ENCODE measurements at regions of chr15 and their contacts with region 1.

Region 1: DNA sequence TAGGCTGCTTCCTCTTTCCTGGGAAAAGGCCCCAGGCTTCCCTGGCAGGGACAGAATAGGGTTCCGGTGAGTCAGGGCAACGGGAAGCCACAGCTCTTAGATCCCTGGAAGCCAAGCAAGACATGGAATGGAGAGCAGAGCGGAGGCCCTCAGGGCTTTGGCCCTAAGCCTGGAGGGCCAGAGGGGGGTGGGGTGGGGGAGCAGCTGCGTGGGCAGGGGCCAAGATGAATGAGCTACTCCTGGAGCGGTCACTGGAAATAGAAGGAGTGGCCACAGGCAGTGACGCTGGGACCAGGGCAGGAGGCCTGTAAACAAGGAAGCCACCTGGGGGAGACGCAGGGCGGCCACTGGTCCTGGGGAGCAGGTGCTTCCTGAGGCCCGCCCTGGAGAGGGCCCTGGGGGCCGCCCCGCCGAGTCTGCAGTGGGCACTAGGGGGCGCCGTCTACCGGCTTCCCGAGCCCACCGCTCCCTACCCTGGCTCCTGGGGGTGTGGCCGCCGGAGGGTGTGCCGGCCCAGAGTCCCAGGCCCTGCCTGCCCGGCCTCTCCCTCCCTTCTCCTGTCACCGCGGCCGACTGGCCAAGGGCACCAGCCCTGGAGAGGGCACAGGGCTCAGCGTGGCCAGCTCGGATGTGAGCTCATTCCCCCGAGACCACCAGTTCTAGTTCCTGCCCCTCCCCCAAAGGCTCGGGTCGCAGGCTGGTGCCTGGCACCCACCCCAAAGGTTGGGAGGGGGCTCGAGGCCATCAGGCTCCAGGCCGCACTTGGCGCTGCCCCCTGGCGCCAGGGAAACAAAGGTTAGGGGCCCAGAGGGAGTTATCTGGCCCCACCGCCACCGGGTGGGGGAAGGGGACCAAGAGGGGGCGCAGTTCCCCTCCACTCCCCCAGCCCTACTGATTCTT is 12.1 kb downstream of the VPS18 start:
- DNase-seq: peak; percentile 55 to 75 (median 69)
- ATAC-seq: peak; percentile 76
- H3K4me3 ChIP-seq: peak overlapping the region; percentile 66
- H3K4me3 Mint-ChIP-seq: peak overlapping the region; percentile 60 to 88 (median 84)
- H3K27ac ChIP-seq: peak overlapping the region; percentile 55
- H3K27ac Mint-ChIP-seq: peak overlapping the region in 8 of 9 donors; percentile 19 to 93 (median 88)
- H3K4me1 ChIP-seq: peaks cover 6 to 16% of the 10 kb centered on the region in 2 donors
- H3K4me1 Mint-ChIP-seq: peaks cover 29 to 44% (median 34%) of the 10 kb centered on the region in 7 donors
- H3K27me3 ChIP-seq: no peaks in the 10 kb centered on the region
- H3K27me3 Mint-ChIP-seq: no peaks in the 10 kb centered on the region

Region 2: DNA sequence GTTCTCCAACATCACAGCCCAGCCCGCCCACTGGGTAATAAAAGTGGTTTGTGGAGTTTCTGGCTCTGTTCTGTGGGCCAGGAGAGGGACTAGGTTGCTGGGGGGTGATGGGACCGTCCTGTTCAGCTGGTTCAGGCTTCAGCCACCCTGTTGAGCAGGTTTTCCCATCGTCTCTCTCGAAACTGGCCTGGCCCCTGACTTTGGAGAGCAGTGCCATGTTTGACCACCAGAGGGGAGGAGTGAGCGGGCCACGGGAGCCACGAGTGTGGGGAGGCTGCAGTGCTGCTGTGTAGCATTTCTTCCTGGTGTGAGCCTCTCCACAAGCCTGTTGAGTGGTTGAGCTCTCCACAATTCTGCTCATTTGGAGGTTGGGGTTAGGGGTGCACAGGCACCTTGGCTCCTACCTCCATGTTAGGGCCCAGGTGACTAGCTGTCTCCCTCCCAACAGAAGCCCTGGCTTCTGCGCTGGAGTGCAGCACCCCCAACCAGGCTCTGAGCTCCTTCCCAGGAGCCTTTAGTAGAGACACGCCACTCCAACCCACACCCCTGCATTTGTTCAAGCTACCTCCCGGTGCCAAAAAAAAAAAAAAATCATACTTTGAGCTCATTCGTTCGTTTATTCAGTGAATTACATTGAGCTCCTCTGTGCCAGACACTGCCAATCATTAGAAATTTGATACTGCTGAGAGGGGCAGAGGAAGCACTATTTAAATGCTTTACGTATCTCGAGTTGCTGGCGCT is 48.6 kb before region 1 on chr15:
- CTCF ChIA-PET with region 1: interaction called, 15 read pairs
- POLR2A ChIA-PET with region 1: interaction called, 3 read pairs
- intact Hi-C with region 1: no loop called
- DNase-seq: peak; percentile 58 to 88 (median 74)
- ATAC-seq: peak; percentile 95
- H3K4me3 ChIP-seq: no peak overlapping the region
- H3K4me3 Mint-ChIP-seq: no peak overlapping the region
- H3K27ac ChIP-seq: no peak overlapping the region
- H3K27ac Mint-ChIP-seq: peak overlapping the region in 1 of 9 donors; percentile 9
- H3K4me1 ChIP-seq: no peaks in the 10 kb centered on the region
- H3K4me1 Mint-ChIP-seq: peaks cover 0 to 18% (median 13%) of the 10 kb centered on the region in 7 donors
- H3K27me3 ChIP-seq: no peaks in the 10 kb centered on the region
- H3K27me3 Mint-ChIP-seq: peaks cover 0 to 2% (median 0%) of the 10 kb centered on the region in 5 donors

Region 3: DNA sequence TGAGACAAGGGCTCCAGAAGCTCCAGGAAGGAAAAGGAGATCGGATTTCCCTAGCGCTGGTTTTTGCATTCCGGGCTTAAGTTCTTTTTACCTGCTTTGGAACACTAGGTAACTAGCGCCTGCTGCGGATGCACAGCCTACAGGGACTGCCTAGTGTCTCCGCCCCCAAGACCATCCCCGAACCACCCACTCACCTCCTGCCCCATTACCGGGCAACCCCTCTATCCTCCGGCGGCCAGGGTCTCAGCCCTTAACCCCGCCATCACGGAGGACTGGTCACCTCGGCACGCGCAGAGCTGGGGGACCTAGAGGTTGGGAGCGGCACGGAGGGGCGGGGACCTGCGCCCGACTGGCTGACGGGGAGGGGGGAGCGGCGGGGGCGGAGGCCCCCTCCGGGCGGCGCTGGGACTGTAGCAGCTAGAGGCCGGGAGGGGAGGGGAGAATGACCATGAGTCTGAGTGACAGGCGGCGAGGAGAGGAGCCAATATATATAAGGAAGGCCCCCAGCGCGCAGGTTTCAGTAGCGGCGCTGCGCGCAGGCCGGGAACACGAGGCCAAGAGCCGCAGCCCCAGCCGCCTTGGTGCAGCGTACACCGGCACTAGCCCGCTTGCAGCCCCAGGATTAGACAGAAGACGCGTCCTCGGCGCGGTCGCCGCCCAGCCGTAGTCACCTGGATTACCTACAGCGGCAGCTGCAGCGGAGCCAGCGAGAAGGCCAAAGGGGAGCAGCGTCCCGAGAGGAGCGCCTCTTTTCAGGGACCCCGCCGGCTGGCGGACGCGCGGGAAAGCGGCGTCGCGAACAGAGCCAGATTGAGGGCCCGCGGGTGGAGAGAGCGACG is 22.7 kb after region 1 on chr15 and contains the start of gene DLL4:
- CTCF ChIA-PET with region 1: interaction called, 31 read pairs
- POLR2A ChIA-PET with region 1: no interaction called
- intact Hi-C with region 1: loop called (anchors 2 kb)
- DNase-seq: peak in 6 of 9 donors; percentile 36 to 54 (median 48)
- ATAC-seq: peak; percentile 56
- H3K4me3 ChIP-seq: peak within 1 kb of the TSS; percentile 68
- H3K4me3 Mint-ChIP-seq: peak within 1 kb of the TSS; percentile 80 to 96 (median 83)
- H3K27ac ChIP-seq: no peak within 1 kb of the TSS
- H3K27ac Mint-ChIP-seq: peak within 1 kb of the TSS in 2 of 9 donors; percentile 32 to 55
- H3K4me1 ChIP-seq: peaks cover 19 to 54% of the 10 kb centered on the region in 2 donors
- H3K4me1 Mint-ChIP-seq: peaks cover 27 to 53% (median 49%) of the 10 kb centered on the region in 7 donors
- H3K27me3 ChIP-seq: peaks cover 5 to 43% of the 10 kb centered on the region in 2 donors
- H3K27me3 Mint-ChIP-seq: peaks cover 53 to 80% (median 56%) of the 10 kb centered on the region in 5 donors
- total RNA-seq, gene DLL4: not detected

Region 4: DNA sequence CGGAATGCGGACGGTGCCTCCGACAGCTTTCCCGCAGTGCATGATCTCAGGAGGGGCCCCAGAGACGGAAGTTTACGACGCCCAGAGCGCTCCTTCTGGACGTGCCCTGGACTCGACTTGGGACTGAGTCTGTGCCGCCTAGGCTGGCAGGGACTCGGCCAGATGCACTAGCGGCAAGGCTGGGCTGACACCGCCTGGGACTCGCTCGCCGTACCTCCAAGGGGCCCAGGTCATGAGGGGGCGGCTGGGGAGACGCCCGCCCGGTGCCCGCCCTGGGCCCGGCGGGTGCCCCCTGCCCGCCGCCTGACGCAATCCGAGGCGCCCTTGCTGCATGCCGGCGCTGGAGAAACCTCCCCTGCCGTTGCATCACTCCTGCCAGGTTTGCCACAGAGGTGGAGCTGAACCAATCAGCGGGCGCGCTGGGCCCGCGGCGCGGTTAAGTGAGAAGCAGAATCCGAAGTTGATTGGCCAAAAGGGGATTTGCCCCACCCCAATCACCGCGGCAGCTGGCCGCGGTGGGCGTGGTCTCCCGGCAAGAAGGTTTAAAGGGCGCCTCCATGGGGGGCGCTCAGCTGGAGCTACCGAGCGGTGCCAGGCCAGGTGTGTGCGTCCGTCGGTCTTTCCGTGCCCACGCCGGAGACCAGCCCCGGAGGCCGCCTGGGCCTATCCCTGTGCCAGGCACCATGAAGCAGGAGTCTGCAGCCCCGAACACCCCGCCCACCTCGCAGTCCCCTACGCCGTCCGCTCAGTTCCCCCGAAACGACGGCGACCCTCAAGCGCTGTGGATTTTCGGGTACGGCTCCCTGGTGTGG is 46.8 kb after region 1 on chr15 and contains the start of gene CHAC1:
- CTCF ChIA-PET with region 1: interaction called, 3 read pairs
- POLR2A ChIA-PET with region 1: interaction called, 4 read pairs
- intact Hi-C with region 1: loop called in 1 of 2 experiments (anchors 1 kb)
- DNase-seq: peak; percentile 79 to 97 (median 94)
- ATAC-seq: peak; percentile 98
- H3K4me3 ChIP-seq: peak within 1 kb of the TSS; percentile 68
- H3K4me3 Mint-ChIP-seq: peak within 1 kb of the TSS; percentile 87 to 96 (median 94)
- H3K27ac ChIP-seq: peak within 1 kb of the TSS; percentile 74
- H3K27ac Mint-ChIP-seq: peak within 1 kb of the TSS in 8 of 9 donors; percentile 76 to 95 (median 88)
- H3K4me1 ChIP-seq: peaks cover 10 to 14% of the 10 kb centered on the region in 2 donors
- H3K4me1 Mint-ChIP-seq: peaks cover 7 to 34% (median 19%) of the 10 kb centered on the region in 7 donors
- H3K27me3 ChIP-seq: no peaks in the 10 kb centered on the region
- H3K27me3 Mint-ChIP-seq: peaks cover 0 to 4% (median 0%) of the 10 kb centered on the region in 5 donors
- total RNA-seq, gene CHAC1: 0.24 to 5.7 (median 1.1) TPM

Region 5: GRCh38 chr15:40982855-40983254 is 76.5 kb after region 1 on chr15:
- CTCF ChIA-PET with region 1: no interaction called
- POLR2A ChIA-PET with region 1: no interaction called
- intact Hi-C with region 1: no loop called
- DNase-seq: no peak
- ATAC-seq: no peak
- H3K4me3 ChIP-seq: no peak overlapping the region
- H3K4me3 Mint-ChIP-seq: no peak overlapping the region
- H3K27ac ChIP-seq: no peak overlapping the region
- H3K27ac Mint-ChIP-seq: peak overlapping the region in 1 of 9 donors; percentile 14
- H3K4me1 ChIP-seq: no peaks in the 10 kb centered on the region
- H3K4me1 Mint-ChIP-seq: no peaks in the 10 kb centered on the region
- H3K27me3 ChIP-seq: no peaks in the 10 kb centered on the region
- H3K27me3 Mint-ChIP-seq: no peaks in the 10 kb centered on the region

Region 6: DNA sequence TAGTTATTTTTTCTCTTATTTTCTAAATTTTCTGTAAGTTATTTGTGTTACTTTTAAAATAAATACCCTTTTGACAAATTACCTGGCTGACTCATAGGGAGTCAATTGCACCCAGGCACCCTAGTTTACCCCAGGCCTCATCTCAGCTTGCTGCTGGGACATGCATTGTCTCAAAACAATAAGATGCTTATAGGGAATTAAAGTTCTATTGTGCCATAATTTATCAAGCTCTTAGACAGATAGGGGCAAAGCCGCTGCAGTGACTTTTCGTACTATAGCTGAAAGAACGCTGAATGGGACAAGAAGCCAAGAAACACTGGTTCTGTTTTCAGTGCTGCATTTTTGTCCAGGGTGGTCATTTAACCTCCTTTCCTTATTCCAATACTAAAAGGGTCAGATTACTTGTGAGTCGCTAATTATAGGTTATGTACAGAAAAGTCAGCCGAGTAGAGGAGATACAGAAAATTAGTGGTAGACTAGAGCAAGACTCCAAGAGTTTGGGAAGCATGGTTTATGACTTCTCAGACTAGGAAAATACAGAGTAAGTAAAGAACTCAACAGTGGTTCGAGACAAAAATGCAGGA is 274.0 kb after region 1 on chr15:
- CTCF ChIA-PET with region 1: interaction called, 21 read pairs
- POLR2A ChIA-PET with region 1: interaction called, 3 read pairs
- intact Hi-C with region 1: loop called (anchors 1 kb)
- DNase-seq: no peak
- ATAC-seq: no peak
- H3K4me3 ChIP-seq: no peak overlapping the region
- H3K4me3 Mint-ChIP-seq: no peak overlapping the region
- H3K27ac ChIP-seq: no peak overlapping the region
- H3K27ac Mint-ChIP-seq: no peak overlapping the region
- H3K4me1 ChIP-seq: no peaks in the 10 kb centered on the region
- H3K4me1 Mint-ChIP-seq: peaks cover 0 to 2% (median 0%) of the 10 kb centered on the region in 7 donors
- H3K27me3 ChIP-seq: no peaks in the 10 kb centered on the region
- H3K27me3 Mint-ChIP-seq: peaks cover 0 to 17% (median 0%) of the 10 kb centered on the region in 5 donors

Region 7: DNA sequence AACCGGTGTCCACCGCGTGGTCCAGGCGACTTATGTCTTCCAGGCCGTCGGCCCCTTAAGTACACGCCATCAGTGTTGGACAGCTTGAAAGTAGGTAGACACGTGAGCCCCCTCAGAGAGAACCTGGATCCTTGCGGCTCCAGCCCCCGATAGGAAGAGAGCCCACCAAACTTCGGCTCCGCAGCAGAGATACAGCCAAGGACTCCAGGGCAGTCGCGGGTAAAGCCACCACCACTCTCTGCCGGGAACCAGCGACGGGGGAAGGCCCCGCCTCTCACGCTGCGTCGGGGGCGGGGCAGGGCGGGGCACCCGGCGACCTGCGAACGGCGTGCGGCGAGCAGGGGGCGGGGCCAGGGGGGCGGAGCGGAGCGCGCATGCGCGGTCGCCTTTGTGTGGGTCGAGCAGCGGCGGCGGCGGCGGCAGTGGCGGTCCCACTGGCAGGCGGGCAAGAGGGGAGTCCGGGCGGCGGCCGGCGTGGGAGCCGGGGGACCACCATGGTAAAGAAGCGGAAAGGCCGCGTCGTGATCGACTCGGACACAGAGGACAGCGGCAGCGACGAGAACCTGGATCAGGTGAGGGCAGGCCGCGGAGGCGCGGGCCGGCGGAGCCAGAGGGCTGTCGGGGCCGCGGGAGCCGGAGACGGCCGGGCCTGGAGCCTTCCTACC is 510.5 kb after region 1 on chr15 and contains the start of gene RTF1:
- CTCF ChIA-PET with region 1: no interaction called
- POLR2A ChIA-PET with region 1: no interaction called
- intact Hi-C with region 1: loop called in 1 of 2 experiments (anchors 2 kb)
- DNase-seq: peak; percentile 92 to 100 (median 96)
- ATAC-seq: peak; percentile 99
- H3K4me3 ChIP-seq: peak within 1 kb of the TSS; percentile 98
- H3K4me3 Mint-ChIP-seq: peak within 1 kb of the TSS; percentile 86 to 96 (median 95)
- H3K27ac ChIP-seq: peak within 1 kb of the TSS; percentile 81
- H3K27ac Mint-ChIP-seq: peak within 1 kb of the TSS; percentile 74 to 98 (median 93)
- H3K4me1 ChIP-seq: peaks cover 6 to 16% of the 10 kb centered on the region in 2 donors
- H3K4me1 Mint-ChIP-seq: peaks cover 34 to 53% (median 43%) of the 10 kb centered on the region in 7 donors
- H3K27me3 ChIP-seq: no peaks in the 10 kb centered on the region
- H3K27me3 Mint-ChIP-seq: no peaks in the 10 kb centered on the region
- total RNA-seq, gene RTF1: 34.0 to 41.3 (median 37.2) TPM

Region 8: GRCh38 chr15:41637086-41637485 is 730.7 kb after region 1 on chr15:
- CTCF ChIA-PET with region 1: no interaction called
- POLR2A ChIA-PET with region 1: no interaction called
- intact Hi-C with region 1: no loop called
- DNase-seq: no peak
- ATAC-seq: no peak
- H3K4me3 ChIP-seq: no peak overlapping the region
- H3K4me3 Mint-ChIP-seq: no peak overlapping the region
- H3K27ac ChIP-seq: no peak overlapping the region
- H3K27ac Mint-ChIP-seq: peak overlapping the region in 1 of 9 donors; percentile 26
- H3K4me1 ChIP-seq: no peaks in the 10 kb centered on the region
- H3K4me1 Mint-ChIP-seq: peaks cover 0 to 16% (median 9%) of the 10 kb centered on the region in 7 donors
- H3K27me3 ChIP-seq: no peaks in the 10 kb centered on the region
- H3K27me3 Mint-ChIP-seq: peaks cover 0 to 3% (median 0%) of the 10 kb centered on the region in 5 donors